ENCODE measurements at regions of chr12 and their contacts with region 1.

Region 1: DNA sequence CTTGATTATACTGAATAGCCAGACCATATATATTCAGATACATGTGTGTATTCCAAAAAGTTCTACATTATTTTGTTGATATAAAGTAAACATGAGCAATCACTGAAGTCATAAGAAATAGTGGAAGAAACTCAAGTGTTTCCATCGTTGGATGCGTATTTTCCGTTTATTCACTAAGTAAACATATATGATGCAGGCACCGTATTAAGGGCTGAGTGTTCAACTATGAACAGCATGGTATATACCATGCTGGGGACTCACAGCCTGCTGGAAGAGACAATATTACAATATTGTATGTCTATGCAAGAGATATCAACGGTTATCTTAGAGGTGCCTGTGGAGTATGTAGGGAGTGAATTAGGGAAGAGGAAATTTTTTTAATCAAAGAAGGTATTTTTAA is 1.2 kb downstream of the PYROXD1 start:
- DNase-seq: peak in 1 of 9 experiments; percentile 27
- ATAC-seq: no peak
- H3K4me3 ChIP-seq: peak overlapping the region; percentile 91 to 95
- H3K4me3 Mint-ChIP-seq: peak overlapping the region; percentile 98
- H3K27ac ChIP-seq: peak overlapping the region; percentile 86 to 89
- H3K27ac Mint-ChIP-seq: peak overlapping the region; percentile 97
- H3K4me1 ChIP-seq: peaks cover 37% of the 10 kb centered on the region
- H3K4me1 Mint-ChIP-seq: peaks cover 46% of the 10 kb centered on the region
- H3K27me3 ChIP-seq: no peaks in the 10 kb centered on the region
- H3K27me3 Mint-ChIP-seq: no peaks in the 10 kb centered on the region
- CTCF ChIP-seq: no peak

Region 2: GRCh38 chr12:21065845-21066244 is 372.8 kb before region 1 on chr12:
- CTCF ChIA-PET with region 1: no interaction called
- POLR2A ChIA-PET with region 1: no interaction called
- intact Hi-C with region 1: no loop called
- DNase-seq: no peak
- ATAC-seq: no peak
- H3K4me3 ChIP-seq: no peak overlapping the region
- H3K4me3 Mint-ChIP-seq: no peak overlapping the region
- H3K27ac ChIP-seq: no peak overlapping the region
- H3K27ac Mint-ChIP-seq: no peak overlapping the region
- H3K4me1 ChIP-seq: no peaks in the 10 kb centered on the region
- H3K4me1 Mint-ChIP-seq: no peaks in the 10 kb centered on the region
- H3K27me3 ChIP-seq: no peaks in the 10 kb centered on the region
- H3K27me3 Mint-ChIP-seq: no peaks in the 10 kb centered on the region
- CTCF ChIP-seq: no peak

Region 3: GRCh38 chr12:21296751-21297406 is 141.8 kb before region 1 on chr12:
- CTCF ChIA-PET with region 1: no interaction called
- POLR2A ChIA-PET with region 1: no interaction called
- intact Hi-C with region 1: loop called in 1 of 2 experiments (anchors 5 kb)
- DNase-seq: peak in 2 of 9 experiments; percentile 10 to 29
- ATAC-seq: no peak
- H3K4me3 ChIP-seq: no peak overlapping the region
- H3K4me3 Mint-ChIP-seq: no peak overlapping the region
- H3K27ac ChIP-seq: no peak overlapping the region
- H3K27ac Mint-ChIP-seq: no peak overlapping the region
- H3K4me1 ChIP-seq: no peaks in the 10 kb centered on the region
- H3K4me1 Mint-ChIP-seq: peaks cover 2% of the 10 kb centered on the region
- H3K27me3 ChIP-seq: no peaks in the 10 kb centered on the region
- H3K27me3 Mint-ChIP-seq: peaks cover 3% of the 10 kb centered on the region
- CTCF ChIP-seq: peak; percentile 71

Region 4: GRCh38 chr12:21336656-21337055 is 102.0 kb before region 1 on chr12:
- CTCF ChIA-PET with region 1: no interaction called
- POLR2A ChIA-PET with region 1: no interaction called
- intact Hi-C with region 1: no loop called
- DNase-seq: no peak
- ATAC-seq: no peak
- H3K4me3 ChIP-seq: no peak overlapping the region
- H3K4me3 Mint-ChIP-seq: no peak overlapping the region
- H3K27ac ChIP-seq: no peak overlapping the region
- H3K27ac Mint-ChIP-seq: no peak overlapping the region
- H3K4me1 ChIP-seq: no peaks in the 10 kb centered on the region
- H3K4me1 Mint-ChIP-seq: no peaks in the 10 kb centered on the region
- H3K27me3 ChIP-seq: no peaks in the 10 kb centered on the region
- H3K27me3 Mint-ChIP-seq: peaks cover 2% of the 10 kb centered on the region
- CTCF ChIP-seq: no peak

Region 5: GRCh38 chr12:21451529-21451928 is 12.9 kb after region 1 on chr12:
- CTCF ChIA-PET with region 1: interaction called, 3 read pairs
- POLR2A ChIA-PET with region 1: interaction called, 21 read pairs
- intact Hi-C with region 1: loop called in 1 of 2 experiments (anchors 1 kb)
- DNase-seq: no peak
- ATAC-seq: no peak
- H3K4me3 ChIP-seq: no peak overlapping the region
- H3K4me3 Mint-ChIP-seq: no peak overlapping the region
- H3K27ac ChIP-seq: no peak overlapping the region
- H3K27ac Mint-ChIP-seq: peak overlapping the region; percentile 33
- H3K4me1 ChIP-seq: peaks cover 11% of the 10 kb centered on the region
- H3K4me1 Mint-ChIP-seq: peaks cover 28% of the 10 kb centered on the region
- H3K27me3 ChIP-seq: no peaks in the 10 kb centered on the region
- H3K27me3 Mint-ChIP-seq: no peaks in the 10 kb centered on the region
- CTCF ChIP-seq: no peak

Region 6: GRCh38 chr12:21476949-21477348 is 38.3 kb after region 1 on chr12:
- CTCF ChIA-PET with region 1: no interaction called
- POLR2A ChIA-PET with region 1: no interaction called
- intact Hi-C with region 1: loop called in 1 of 2 experiments (anchors 5 kb)
- DNase-seq: no peak
- ATAC-seq: no peak
- H3K4me3 ChIP-seq: no peak overlapping the region
- H3K4me3 Mint-ChIP-seq: no peak overlapping the region
- H3K27ac ChIP-seq: no peak overlapping the region
- H3K27ac Mint-ChIP-seq: no peak overlapping the region
- H3K4me1 ChIP-seq: no peaks in the 10 kb centered on the region
- H3K4me1 Mint-ChIP-seq: peaks cover 3% of the 10 kb centered on the region
- H3K27me3 ChIP-seq: no peaks in the 10 kb centered on the region
- H3K27me3 Mint-ChIP-seq: no peaks in the 10 kb centered on the region
- CTCF ChIP-seq: no peak

Region 7: DNA sequence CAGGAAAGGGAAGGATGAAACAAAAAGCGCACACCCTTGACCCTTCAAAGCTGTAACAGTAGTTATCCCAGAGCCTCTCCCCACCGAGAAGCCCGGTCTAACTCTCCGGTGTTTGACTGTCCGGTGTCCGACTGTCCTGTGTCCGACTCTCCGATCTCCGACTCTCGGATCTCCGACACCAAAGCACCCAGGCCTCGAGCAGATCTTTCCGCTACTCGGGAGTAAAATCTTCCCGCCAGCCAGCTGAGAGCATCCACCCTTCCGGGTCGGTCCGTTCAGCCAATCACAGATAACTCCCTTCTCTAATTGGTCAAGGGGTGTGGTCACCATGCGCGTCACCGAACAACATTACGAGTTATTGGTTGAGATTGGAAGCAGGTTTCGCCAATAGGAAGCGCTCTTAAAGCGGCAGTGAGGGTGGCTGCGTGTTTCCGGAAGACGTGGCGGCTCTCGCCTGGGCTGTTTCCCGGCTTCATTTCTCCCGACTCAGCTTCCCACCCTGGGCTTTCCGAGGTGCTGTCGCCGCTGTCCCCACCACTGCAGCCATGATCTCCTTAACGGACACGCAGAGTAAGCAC is 62.8 kb after region 1 on chr12 and contains the starts of genes GOLT1B and RECQL:
- CTCF ChIA-PET with region 1: no interaction called
- POLR2A ChIA-PET with region 1: interaction called, 14 read pairs
- intact Hi-C with region 1: loop called (anchors 1 to 2 kb)
- DNase-seq: peak; percentile 74 to 98 (median 88)
- ATAC-seq: peak; percentile 94
- H3K4me3 ChIP-seq: peak within 1 kb of the TSS; percentile 89 to 95
- H3K4me3 Mint-ChIP-seq: no peak within 1 kb of the TSS
- H3K27ac ChIP-seq: peak within 1 kb of the TSS; percentile 83 to 84
- H3K27ac Mint-ChIP-seq: no peak within 1 kb of the TSS
- H3K4me1 ChIP-seq: peaks cover 35% of the 10 kb centered on the region
- H3K4me1 Mint-ChIP-seq: peaks cover 60% of the 10 kb centered on the region
- H3K27me3 ChIP-seq: no peaks in the 10 kb centered on the region
- H3K27me3 Mint-ChIP-seq: no peaks in the 10 kb centered on the region
- CTCF ChIP-seq: no peak
- total RNA-seq, gene GOLT1B: 45.2 to 52.9 TPM
- total RNA-seq, gene RECQL: 9.9 to 14.6 TPM

Region 8: DNA sequence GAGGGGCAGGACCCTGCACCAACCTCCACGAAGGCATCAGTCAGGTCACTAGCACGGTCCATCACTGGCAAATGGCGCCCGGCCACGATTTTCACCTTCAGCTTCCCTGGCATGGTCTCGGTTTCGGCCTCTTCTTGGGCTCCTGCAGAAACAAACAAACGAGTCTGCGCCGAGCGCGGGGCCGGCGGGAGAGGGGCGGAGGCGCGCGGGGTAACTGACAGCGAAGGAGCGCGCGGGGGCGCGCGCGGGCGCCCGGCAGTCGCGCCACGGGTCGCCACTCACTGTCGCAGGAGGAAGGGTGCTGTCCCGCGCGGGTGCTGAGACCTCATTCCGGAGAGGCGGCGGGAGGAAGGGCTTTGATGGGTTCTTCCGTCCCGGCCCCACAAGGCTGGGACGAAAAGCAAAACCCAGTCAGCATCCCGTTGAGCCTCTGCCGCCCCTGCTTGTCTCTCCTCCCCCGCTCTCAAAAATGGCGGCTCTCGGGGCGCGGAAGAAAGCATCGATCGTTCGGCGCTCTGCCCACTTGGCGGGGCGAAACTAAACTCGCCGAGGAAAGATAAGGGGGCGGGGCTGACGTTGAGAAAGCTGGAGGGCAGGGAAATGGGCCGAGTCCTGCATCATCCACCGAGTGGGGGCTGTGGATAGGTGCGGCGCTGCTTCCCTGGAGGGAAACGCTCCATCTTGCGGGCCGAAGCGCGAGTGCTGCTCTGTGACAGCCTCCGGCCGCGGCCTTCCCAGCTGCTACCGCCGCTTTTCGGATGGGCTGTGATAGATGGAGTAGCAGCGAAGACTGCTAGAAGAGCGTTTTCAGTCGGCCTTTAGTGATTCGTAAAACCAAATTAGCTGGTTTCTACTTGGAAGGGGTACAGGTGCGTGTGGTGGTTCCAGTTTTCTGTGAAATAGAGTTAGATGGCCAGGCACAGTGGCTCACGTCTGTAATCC is 1105.7 kb after region 1 on chr12 and contains the start of gene C2CD5:
- CTCF ChIA-PET with region 1: no interaction called
- POLR2A ChIA-PET with region 1: no interaction called
- intact Hi-C with region 1: loop called in 1 of 2 experiments (anchors 10 kb)
- DNase-seq: peak; percentile 92 to 99 (median 95)
- ATAC-seq: peak; percentile 91
- H3K4me3 ChIP-seq: peak within 1 kb of the TSS; percentile 79 to 99
- H3K4me3 Mint-ChIP-seq: peak within 1 kb of the TSS; percentile 94
- H3K27ac ChIP-seq: peak within 1 kb of the TSS; percentile 92
- H3K27ac Mint-ChIP-seq: peak within 1 kb of the TSS; percentile 94
- H3K4me1 ChIP-seq: peaks cover 25% of the 10 kb centered on the region
- H3K4me1 Mint-ChIP-seq: peaks cover 38% of the 10 kb centered on the region
- H3K27me3 ChIP-seq: no peaks in the 10 kb centered on the region
- H3K27me3 Mint-ChIP-seq: no peaks in the 10 kb centered on the region
- CTCF ChIP-seq: peak; percentile 16
- total RNA-seq, gene C2CD5: 19.5 to 24.4 TPM

Measured in CD8-positive, alpha-beta T cell (primary cell).